ENCODE measurements at regions of chr3 and their contacts with region 1.

Region 1: DNA sequence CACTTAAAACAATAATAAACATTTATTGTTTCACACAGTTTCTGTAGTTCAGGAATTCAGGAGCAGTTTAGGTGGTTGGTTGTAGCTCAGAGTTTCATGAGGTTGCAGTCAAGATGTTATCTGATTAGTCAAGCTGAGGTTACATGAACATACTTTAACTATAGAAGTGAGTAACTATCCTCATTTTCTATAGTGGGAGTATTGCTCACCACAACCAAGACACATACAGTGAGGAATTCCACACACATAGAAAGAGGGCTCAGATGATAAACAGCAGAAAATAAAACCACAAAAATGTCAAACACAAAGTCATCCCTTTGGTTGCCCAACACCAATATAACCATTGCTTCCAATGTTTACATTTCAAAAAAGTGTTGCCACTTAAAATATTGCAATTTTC is 13.6 kb downstream of the SCN11A start:
- DNase-seq: peak; percentile 93
- H3K4me3 ChIP-seq: no peak overlapping the region
- H3K27ac ChIP-seq: peak overlapping the region; percentile 40
- H3K4me1 ChIP-seq: peaks cover 13% of the 10 kb centered on the region
- H3K27me3 ChIP-seq: no peaks in the 10 kb centered on the region
- CTCF ChIP-seq: no peak

Region 2: DNA sequence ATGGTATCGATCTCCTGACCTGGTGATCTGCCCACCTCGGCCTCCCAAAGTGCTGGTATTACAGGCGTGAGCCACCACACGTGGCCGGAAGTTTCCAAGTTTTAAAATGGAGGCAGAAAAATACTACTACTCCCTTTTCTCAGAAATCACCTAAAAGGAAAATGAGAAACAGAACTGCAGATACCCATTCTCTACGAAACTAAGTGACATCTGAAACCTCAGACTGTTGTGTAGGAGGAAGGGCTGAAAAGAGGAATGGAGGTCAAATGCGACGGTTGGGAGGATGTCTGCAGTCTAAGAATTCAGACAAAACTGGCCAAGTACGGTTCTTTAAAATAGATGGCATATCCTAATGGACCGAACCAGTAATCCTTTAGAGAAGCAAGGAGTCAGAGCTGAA is 37.7 kb after region 1 on chr3:
- CTCF ChIA-PET with region 1: no interaction called
- dilution Hi-C with region 1: no loop called
- in situ Hi-C with region 1: no loop called
- intact Hi-C with region 1: no loop called
- DNase-seq: no peak
- H3K4me3 ChIP-seq: no peak overlapping the region
- H3K27ac ChIP-seq: no peak overlapping the region
- H3K4me1 ChIP-seq: no peaks in the 10 kb centered on the region
- H3K27me3 ChIP-seq: no peaks in the 10 kb centered on the region
- CTCF ChIP-seq: no peak

Region 3: DNA sequence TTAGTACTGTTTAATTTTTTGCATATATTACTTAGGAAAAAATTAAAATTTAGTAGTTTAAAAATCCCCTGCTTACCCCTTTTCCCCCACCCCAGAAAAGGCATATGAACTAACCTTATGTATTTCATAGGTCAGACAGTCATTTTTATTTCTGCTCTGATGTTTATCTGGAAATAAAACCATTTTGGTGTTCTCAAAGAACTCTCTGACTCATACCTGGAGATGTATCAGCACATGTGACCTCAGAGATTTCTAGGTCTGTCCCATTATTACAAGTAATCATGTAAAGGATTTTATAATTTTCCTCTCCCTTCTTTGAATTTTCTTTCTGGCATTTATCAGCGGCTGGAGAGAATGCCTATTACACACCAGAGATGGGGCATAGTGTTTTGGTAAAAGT is 277.3 kb after region 1 on chr3:
- CTCF ChIA-PET with region 1: no interaction called
- dilution Hi-C with region 1: no loop called
- in situ Hi-C with region 1: no loop called
- intact Hi-C with region 1: no loop called
- DNase-seq: no peak
- H3K4me3 ChIP-seq: no peak overlapping the region
- H3K27ac ChIP-seq: no peak overlapping the region
- H3K4me1 ChIP-seq: no peaks in the 10 kb centered on the region
- H3K27me3 ChIP-seq: peaks cover 2% of the 10 kb centered on the region
- CTCF ChIP-seq: no peak

Region 4: GRCh38 chr3:39406368-39407258 is 368.4 kb after region 1 on chr3 and contains the start of gene RPSA:
- CTCF ChIA-PET with region 1: no interaction called
- dilution Hi-C with region 1: no loop called
- in situ Hi-C with region 1: no loop called
- intact Hi-C with region 1: loop called (anchors 1 kb)
- DNase-seq: peak; percentile 98
- H3K4me3 ChIP-seq: peak within 1 kb of the TSS; percentile 58 to 95 (median 92)
- H3K27ac ChIP-seq: peak within 1 kb of the TSS; percentile 93
- H3K4me1 ChIP-seq: peaks cover 19% of the 10 kb centered on the region
- H3K27me3 ChIP-seq: no peaks in the 10 kb centered on the region
- CTCF ChIP-seq: peak; percentile 25 to 55
- total RNA-seq, gene RPSA: 874 to 1,396 TPM

Measured in mammary epithelial cell (primary cell).